HEK293 (cell line): ENCODE measurements at regions of chr6 and their contacts with region 1.

Region 1: DNA sequence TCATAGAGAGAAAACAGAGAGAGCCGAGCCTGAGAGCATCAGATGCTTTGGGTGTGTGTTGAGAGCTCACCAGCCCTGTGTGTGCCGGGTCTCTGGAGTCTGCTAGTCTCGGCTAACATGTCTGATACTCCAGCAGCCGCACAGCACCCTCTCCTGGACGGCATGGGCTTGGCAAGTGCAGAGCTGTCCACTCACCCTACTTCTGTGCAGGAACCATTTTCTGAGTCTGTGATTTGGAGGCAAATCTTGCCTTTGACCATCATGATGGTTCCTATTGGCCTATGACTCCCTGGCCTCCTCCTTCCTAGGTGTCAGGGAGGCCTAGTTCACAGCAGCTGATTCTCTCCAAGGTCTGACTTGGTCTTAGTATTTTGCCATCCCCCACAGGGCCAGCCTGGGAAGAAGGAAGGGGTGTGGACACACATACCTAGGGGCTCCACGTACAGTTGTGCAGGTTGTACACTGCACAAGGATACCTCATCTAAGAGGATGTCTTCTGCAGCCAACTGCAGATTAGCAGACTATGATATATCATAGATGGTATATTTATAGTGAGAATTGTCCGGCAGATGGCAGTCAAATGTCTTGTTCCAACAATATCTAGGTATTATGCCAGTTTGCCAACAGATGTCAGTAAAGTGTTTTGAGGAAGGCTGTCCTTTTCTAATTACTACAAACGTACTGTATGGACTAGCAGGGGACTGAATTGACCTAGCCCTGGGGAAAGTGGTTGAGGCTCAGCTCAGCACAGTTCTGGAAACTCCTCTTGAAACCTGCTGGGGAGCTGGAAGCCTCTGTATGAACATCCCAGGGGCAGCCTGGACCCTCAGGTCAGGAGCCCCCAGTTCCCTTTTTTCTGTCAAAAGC is 13.0 kb downstream of the FGD2 start:
- H3K4me3 ChIP-seq: no peak overlapping the region
- H3K27ac ChIP-seq: no peak overlapping the region
- H3K4me1 ChIP-seq: peaks cover 3% of the 10 kb centered on the region; the same call in 1 of the 2 replicates
- CTCF ChIP-seq: peak; percentile 76

Region 2: DNA sequence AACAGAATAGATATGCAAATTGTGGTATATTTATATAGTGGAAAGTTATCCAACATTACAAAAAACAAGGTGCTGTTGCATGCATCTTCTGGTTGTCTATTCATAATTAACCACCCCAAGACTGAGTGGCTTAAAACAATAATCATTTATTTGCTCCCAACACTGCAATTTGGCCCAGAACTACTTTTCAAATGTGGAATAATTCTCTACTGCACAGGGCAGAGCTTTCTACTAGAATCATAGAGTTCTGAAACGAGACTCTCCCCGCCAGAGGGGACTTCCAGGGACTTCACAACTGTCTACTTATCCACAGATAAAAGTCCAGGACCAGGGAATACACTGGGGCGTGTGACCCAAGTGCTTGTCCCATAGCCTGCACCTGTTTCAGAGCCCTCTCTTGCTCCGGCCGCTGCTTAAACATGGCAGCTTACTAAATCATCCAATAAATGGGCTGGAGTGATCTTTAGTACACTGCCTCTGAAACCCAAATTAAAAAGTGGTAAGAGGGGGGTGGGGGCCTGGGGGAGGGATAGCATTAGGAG is 329.8 kb before region 1 on chr6:
- CTCF ChIA-PET with region 1: no interaction called
- POLR2A ChIA-PET with region 1: no interaction called
- H3K4me3 ChIP-seq: no peak overlapping the region
- H3K27ac ChIP-seq: no peak overlapping the region
- H3K4me1 ChIP-seq: no peaks in the 10 kb centered on the region
- CTCF ChIP-seq: no peak

Region 3: DNA sequence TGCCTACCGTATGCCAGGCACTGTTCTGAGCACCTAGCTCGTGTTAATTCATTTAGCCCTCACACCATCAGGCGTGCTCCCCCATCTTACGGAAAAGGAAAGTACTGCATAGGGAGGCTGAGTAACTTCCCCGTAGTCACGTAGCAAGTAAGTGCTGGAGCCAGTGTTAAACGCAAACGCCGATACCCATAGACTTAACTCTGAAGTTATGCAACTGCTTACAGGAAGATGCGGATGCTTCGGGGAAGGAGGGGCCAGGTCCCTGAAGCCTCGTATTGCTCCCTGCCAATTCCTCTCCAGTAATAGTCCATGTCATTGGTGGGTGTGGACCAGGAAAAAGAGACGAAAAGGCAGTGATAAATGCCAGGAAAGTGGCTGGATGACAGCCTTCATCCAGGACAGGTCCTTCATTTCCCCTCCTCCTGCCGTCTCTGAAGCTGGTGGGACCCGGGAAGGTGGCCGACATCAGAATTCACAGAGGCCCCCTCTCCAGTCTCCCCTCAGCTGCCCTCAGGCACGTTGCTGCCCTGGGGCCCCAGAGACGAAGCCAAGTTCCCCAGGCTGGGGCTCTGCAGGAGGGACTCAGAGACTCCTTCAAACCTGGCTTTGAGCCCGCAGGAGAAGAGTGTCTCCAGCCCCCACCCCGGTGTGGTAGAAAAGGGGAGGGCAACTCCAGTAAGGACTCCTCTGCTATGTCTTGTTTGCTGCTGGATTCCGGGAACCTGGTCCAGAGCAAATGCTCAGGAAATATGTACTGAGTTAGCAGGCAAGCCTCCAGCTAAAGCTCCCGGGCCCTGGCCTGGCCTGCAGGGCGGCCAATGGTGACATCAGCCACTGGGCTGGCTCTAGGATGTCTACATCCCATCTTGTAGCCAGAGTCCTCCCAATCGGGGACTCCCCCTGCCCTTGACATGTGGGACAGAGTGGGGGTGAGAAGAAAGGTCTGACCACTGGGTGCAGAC is 283.0 kb before region 1 on chr6:
- CTCF ChIA-PET with region 1: no interaction called
- POLR2A ChIA-PET with region 1: no interaction called
- H3K4me3 ChIP-seq: no peak overlapping the region
- H3K27ac ChIP-seq: no peak overlapping the region
- H3K4me1 ChIP-seq: no peaks in the 10 kb centered on the region
- CTCF ChIP-seq: no peak

Region 4: DNA sequence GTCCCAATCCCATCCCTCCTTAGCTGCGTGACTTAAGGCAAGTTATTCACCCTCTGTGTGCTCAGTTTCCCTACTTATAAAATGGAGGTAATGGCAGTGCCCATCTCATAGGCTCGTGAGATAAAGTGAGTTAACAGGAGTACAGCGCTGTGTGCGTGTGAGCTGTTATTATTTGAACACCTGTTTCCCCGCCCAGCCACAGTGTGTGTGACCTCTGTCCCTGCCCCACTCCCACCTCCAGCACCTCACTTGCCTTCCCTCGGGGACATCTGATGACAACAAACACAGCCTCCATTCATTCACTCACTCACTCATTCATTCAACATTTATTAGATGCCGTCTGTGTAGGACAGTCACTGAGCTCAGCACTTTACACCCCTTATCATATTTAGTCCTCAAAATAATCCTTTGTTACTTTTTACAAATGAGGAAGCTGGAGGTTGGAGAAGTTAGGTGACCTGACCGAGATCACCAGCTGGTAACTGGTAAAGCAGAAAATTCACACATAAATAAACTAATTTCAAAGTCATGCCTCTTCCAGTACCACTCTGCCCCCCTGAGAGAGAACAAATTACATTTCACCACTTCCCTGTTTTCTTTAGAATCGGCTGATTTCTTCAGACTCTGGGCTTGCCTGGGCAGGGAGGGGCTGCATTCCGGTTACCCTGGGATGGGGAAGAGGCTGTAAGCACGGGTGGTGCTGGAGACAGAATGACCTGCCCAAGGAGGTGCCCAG is 237.8 kb before region 1 on chr6:
- CTCF ChIA-PET with region 1: interaction called, 17 read pairs
- POLR2A ChIA-PET with region 1: no interaction called
- H3K4me3 ChIP-seq: no peak overlapping the region
- H3K27ac ChIP-seq: no peak overlapping the region
- H3K4me1 ChIP-seq: no peaks in the 10 kb centered on the region
- CTCF ChIP-seq: no peak

Region 5: DNA sequence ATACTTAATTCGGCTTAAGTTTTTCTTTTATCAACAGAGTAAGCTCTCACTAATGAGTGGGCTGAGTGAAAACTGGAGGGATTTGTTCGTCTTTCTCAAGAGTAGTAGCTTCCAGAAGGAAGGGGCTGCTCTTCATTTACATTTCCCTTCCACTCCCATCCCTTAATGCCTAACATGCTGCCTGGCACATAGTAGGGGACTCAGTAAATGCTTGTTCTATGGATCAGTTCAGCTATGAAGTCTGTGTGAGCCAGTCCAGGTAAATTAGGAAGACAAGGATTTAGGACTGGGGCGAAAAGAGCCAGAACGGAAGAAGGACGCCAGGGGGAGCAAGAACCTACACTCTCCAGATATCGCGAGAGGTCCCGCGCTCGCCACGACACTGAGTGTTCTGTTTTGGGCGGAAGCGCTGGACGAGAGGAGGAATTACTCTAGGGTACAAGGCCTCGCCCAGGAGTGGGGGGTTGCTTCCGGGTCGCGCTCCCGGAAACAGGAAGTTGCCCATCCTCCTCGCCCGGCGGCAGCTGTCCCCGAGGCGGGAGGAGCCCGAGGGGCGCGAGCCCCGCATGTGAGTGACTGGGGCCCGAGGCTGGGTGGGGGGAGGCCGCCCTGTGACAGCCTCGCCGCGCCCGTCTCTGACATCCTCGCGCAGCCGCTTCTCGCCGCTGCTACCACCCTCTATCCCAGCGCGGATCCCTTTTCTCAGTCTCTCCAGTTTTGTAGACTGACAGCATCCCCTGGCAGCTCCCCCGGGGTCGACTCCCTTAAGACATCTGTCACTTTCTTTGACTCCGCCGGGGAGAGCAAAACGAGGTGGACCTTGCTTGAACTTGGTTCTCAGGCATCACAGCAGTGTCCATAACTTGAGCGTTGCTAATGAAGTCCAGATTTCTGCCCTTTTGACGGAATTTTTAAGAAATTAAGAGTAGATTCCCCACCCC is 132.7 kb before region 1 on chr6 and contains the start of gene C6orf89:
- CTCF ChIA-PET with region 1: interaction called, 216 read pairs
- POLR2A ChIA-PET with region 1: interaction called, 10 read pairs
- H3K4me3 ChIP-seq: peak within 1 kb of the TSS; percentile 81
- H3K27ac ChIP-seq: peak within 1 kb of the TSS; percentile 66
- H3K4me1 ChIP-seq: peaks cover 3% of the 10 kb centered on the region; the same call in 1 of the 2 replicates
- CTCF ChIP-seq: peak; percentile 92

Region 6: DNA sequence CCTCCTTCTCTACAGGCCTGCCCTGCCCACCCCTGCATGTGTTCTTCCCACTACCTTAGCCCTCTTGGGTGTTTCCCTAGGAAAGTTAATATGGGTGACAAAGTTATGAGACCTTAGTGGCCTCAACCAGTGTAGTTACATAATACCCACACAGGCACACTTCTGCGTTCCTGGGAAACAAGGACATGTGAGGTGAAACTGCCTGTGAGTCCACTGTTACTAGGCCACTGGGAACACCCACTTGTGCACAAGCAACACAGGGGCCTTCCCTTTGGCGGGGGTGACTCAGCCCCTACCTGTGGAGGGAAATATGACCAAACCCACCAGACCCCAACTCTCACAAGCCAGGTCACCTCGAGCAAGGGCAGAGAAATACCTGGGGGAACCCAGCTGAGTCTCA is 51.1 kb before region 1 on chr6:
- CTCF ChIA-PET with region 1: interaction called, 15 read pairs
- POLR2A ChIA-PET with region 1: no interaction called
- H3K4me3 ChIP-seq: no peak overlapping the region
- H3K27ac ChIP-seq: no peak overlapping the region
- H3K4me1 ChIP-seq: no peaks in the 10 kb centered on the region
- CTCF ChIP-seq: no peak

Region 7: GRCh38 chr6:37005061-37005810 is 13.2 kb before region 1 on chr6 and contains the start of gene FGD2:
- CTCF ChIA-PET with region 1: interaction called, 50 read pairs
- POLR2A ChIA-PET with region 1: interaction called, 5 read pairs
- H3K4me3 ChIP-seq: no peak within 1 kb of the TSS
- H3K27ac ChIP-seq: no peak within 1 kb of the TSS
- H3K4me1 ChIP-seq: no peaks in the 10 kb centered on the region
- CTCF ChIP-seq: no peak

Region 8: DNA sequence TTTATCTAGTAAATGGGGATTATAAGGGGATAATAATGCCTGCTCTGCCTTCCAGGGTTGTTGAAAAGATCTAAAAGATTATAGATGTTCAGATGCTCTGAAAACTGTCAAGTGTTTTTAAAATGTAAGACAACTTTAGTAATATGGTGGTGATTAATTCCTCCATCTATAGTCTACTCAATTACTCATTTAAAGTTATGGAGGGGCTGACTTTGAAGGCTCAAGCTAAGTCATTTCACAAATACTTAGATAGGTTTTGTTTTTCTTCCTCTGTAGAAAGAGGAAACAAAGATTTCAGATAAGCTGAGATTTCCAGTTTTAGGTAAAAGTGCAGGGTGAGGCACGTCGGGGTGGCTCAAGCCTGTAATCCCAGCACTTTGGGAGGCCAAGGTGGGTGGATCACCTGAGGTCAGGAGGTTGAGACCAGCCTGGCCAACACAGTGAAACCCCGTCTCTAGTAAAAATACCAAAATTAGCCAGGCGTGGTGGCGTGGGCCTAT is 101.0 kb after region 1 on chr6:
- CTCF ChIA-PET with region 1: no interaction called
- POLR2A ChIA-PET with region 1: no interaction called
- H3K4me3 ChIP-seq: no peak overlapping the region
- H3K27ac ChIP-seq: no peak overlapping the region
- H3K4me1 ChIP-seq: no peaks in the 10 kb centered on the region
- CTCF ChIP-seq: no peak

Region 9: DNA sequence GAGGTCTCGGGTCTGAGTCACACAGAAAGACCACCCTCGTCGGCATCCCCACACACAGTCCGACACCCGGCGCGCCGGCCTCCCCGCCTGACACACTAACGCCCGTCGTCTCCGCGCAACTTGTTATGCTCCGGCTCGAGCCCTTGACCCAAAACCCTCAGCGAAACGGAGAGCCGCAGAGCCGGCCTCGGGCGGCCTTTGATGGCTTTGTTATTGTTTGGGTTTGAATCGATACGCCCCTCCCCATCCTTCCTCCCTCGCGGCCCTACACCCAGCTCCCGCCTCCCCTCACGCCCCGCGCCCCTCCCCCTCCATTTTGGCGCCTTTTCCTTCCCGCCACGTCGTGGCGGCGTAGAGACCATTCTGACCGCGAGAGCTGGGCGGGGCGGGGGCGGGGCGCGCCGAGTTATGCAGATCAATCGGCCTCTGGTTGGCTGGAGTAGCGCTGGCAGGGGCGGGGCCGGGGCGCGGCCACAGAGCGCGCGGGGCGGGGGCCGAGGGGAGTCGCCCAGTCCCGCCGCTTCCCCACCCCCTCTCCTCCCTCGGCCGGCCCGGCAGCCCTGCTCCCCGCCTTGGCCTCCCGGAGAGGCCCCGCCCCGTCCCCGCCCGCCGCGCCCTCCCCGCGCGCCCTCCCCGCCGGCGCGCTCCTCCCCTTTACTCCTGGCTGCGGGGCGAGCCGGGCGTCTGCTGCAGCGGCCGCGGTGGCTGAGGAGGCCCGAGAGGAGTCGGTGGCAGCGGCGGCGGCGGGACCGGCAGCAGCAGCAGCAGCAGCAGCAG is 151.3 kb after region 1 on chr6 and contains the start of gene PIM1:
- CTCF ChIA-PET with region 1: interaction called, 401 read pairs
- POLR2A ChIA-PET with region 1: interaction called, 10 read pairs
- H3K4me3 ChIP-seq: peak within 1 kb of the TSS; percentile 97
- H3K27ac ChIP-seq: peak within 1 kb of the TSS; percentile 94
- H3K4me1 ChIP-seq: peaks cover 3% of the 10 kb centered on the region
- CTCF ChIP-seq: no peak